ENCODE measurements at regions of chr7 and their contacts with region 1.

Region 1: GRCh38 chr7:76179686-76180085 is 22.0 kb upstream of the SRRM3 start:
- DNase-seq: no peak
- ATAC-seq: no peak
- H3K4me3 ChIP-seq: no peak overlapping the region
- H3K4me3 Mint-ChIP-seq: no peak overlapping the region
- H3K27ac ChIP-seq: no peak overlapping the region
- H3K27ac Mint-ChIP-seq: no peak overlapping the region
- H3K4me1 ChIP-seq: peaks cover 6% of the 10 kb centered on the region
- H3K4me1 Mint-ChIP-seq: no peaks in the 10 kb centered on the region
- H3K27me3 ChIP-seq: no peaks in the 10 kb centered on the region
- H3K27me3 Mint-ChIP-seq: no peaks in the 10 kb centered on the region
- CTCF ChIP-seq: no peak

Region 2: GRCh38 chr7:76262683-76263402 is 83.2 kb after region 1 on chr7:
- CTCF ChIA-PET with region 1: interaction called, 5 read pairs
- POLR2A ChIA-PET with region 1: no interaction called
- intact Hi-C with region 1: loop called in 1 of 2 experiments (anchors 2 kb)
- DNase-seq: peak in 4 of 14 experiments; percentile 36 to 60 (median 48)
- ATAC-seq: peak; percentile 30
- H3K4me3 ChIP-seq: no peak overlapping the region
- H3K4me3 Mint-ChIP-seq: no peak overlapping the region
- H3K27ac ChIP-seq: no peak overlapping the region
- H3K27ac Mint-ChIP-seq: no peak overlapping the region
- H3K4me1 ChIP-seq: peaks cover 12% of the 10 kb centered on the region
- H3K4me1 Mint-ChIP-seq: peaks cover 1% of the 10 kb centered on the region
- H3K27me3 ChIP-seq: peaks cover 27 to 36% of the 10 kb centered on the region in 2 experiments
- H3K27me3 Mint-ChIP-seq: peaks cover 58% of the 10 kb centered on the region
- CTCF ChIP-seq: peak; percentile 47

Region 3: DNA sequence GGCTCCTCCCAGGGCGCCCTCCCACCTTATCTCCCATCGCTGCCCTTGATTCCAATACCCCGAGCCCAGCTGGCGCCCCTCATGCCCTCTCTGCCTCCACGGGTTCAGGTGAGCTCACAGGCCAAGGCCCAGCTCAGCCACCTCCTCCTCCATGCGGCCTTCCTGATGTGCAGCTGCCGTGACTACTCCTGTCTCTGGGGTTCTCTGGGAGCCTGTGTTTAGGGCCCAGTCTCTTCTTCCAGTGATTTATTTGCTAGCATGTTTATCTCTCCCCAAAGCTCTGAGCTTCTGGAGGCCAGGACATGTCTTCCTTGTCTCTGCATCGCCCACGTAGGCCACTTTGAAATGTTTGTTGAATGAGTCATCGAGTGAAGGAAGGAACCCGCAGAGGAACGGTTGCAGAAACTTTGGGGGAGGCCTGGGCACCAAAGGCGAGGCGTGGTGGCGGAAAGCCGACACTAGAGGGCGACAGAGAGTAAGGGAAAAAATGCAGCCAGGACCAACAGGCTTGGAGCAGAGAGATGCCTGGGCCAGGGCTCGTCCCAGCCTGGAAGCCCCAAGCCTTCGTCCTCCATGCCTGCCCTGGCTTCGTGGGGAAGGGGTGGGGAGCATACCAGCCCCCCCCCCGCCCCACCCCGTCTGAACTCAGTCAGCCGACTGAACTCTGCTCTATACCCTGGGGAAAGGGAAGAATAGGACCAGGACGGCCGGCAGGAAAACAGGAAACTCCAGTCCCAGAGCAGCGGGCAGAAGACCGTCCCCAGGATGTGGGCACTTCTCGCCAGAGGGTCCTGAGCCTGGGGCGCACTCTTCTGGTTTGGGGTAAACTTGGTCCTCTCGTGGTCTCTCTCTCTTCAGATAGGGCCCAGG is 111.9 kb after region 1 on chr7:
- CTCF ChIA-PET with region 1: interaction called, 7 read pairs
- POLR2A ChIA-PET with region 1: no interaction called
- intact Hi-C with region 1: loop called in 1 of 2 experiments (anchors 1 kb)
- DNase-seq: peak; percentile 65 to 92 (median 82)
- ATAC-seq: peak; percentile 92
- H3K4me3 ChIP-seq: no peak overlapping the region
- H3K4me3 Mint-ChIP-seq: no peak overlapping the region
- H3K27ac ChIP-seq: no peak overlapping the region
- H3K27ac Mint-ChIP-seq: no peak overlapping the region
- H3K4me1 ChIP-seq: peaks cover 12% of the 10 kb centered on the region
- H3K4me1 Mint-ChIP-seq: peaks cover 4% of the 10 kb centered on the region
- H3K27me3 ChIP-seq: no peaks in the 10 kb centered on the region
- H3K27me3 Mint-ChIP-seq: no peaks in the 10 kb centered on the region
- CTCF ChIP-seq: peak; percentile 92